ENCODE measurements at regions of chr11 and their contacts with region 1.

Region 1: DNA sequence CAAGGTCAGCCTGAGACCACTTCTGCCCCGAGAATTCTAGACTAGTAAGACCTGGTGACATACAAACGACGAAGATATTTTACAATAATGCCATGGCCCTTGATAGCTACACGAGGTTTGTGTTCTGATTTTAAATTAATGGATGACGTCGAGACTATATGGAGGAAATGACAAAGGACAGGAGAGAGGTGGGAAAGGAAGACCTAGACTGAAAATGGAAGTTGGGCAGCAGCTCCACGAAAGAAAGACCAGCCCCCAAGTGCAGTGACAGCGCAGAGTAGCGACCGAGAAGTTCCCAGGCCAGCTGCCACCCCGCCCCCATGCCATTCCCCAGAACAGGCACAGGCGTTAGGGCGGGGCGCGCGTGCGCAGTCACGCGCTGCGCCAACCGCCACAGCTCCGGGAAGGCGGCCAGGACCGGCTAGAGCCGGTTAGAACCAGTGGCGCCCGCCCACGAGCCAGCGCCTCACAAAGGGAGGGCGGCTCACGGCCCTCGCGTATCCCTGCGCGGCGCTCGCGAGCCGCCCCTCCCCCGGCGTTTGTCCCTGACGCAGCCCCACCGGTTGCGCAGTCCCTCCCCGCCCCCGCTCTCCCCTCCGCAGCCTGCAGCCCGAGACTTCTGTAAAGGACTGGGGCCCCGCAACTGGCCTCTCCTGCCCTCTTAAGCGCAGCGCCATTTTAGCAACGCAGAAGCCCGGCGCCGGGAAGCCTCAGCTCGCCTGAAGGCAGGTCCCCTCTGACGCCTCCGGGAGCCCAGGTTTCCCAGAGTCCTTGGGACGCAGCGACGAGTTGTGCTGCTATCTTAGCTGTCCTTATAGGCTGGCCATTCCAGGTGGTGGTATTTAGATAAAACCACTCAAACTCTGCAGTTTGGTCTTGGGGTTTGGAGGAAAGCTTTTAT is 1.5 kb upstream of the MALAT1 start:
- DNase-seq: peak; percentile 98
- ATAC-seq: peak; percentile 76
- H3K4me3 Mint-ChIP-seq: no peak overlapping the region
- H3K27ac Mint-ChIP-seq: no peak overlapping the region
- H3K4me1 Mint-ChIP-seq: peaks cover 35% of the 10 kb centered on the region
- H3K27me3 Mint-ChIP-seq: no peaks in the 10 kb centered on the region

Region 2: DNA sequence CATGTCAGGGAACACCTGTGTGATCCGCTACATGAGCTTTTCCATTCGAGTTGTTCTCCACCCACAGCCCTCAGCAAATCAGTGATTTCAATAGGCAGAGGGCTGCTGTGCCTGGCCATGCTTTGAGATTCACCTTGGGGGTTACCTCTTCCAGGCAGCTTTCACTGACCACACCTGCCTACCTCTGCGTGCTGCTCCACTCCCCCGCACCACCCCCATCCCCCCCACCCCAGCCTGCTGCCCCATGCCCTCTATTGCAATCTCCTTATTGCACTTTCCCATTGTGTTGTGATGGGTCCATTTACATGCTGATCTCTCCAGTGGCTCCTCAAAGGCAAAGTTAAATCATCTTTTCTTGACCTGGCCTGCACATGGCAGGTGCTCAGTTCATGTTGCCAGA is 253.6 kb before region 1 on chr11:
- CTCF ChIA-PET with region 1: no interaction called
- POLR2A ChIA-PET with region 1: no interaction called
- DNase-seq: no peak
- ATAC-seq: no peak
- H3K4me3 Mint-ChIP-seq: no peak overlapping the region
- H3K27ac Mint-ChIP-seq: no peak overlapping the region
- H3K4me1 Mint-ChIP-seq: no peaks in the 10 kb centered on the region
- H3K27me3 Mint-ChIP-seq: no peaks in the 10 kb centered on the region

Region 3: GRCh38 chr11:65261591-65262380 is 235.6 kb before region 1 on chr11 and contains the start of gene POLA2:
- CTCF ChIA-PET with region 1: no interaction called
- POLR2A ChIA-PET with region 1: interaction called, 20 read pairs
- DNase-seq: peak; percentile 97
- ATAC-seq: peak; percentile 96
- H3K4me3 Mint-ChIP-seq: peak within 1 kb of the TSS; percentile 97
- H3K27ac Mint-ChIP-seq: peak within 1 kb of the TSS; percentile 94
- H3K4me1 Mint-ChIP-seq: peaks cover 61% of the 10 kb centered on the region
- H3K27me3 Mint-ChIP-seq: no peaks in the 10 kb centered on the region
- total RNA-seq, gene POLA2: 63.6 to 76.1 TPM

Region 4: DNA sequence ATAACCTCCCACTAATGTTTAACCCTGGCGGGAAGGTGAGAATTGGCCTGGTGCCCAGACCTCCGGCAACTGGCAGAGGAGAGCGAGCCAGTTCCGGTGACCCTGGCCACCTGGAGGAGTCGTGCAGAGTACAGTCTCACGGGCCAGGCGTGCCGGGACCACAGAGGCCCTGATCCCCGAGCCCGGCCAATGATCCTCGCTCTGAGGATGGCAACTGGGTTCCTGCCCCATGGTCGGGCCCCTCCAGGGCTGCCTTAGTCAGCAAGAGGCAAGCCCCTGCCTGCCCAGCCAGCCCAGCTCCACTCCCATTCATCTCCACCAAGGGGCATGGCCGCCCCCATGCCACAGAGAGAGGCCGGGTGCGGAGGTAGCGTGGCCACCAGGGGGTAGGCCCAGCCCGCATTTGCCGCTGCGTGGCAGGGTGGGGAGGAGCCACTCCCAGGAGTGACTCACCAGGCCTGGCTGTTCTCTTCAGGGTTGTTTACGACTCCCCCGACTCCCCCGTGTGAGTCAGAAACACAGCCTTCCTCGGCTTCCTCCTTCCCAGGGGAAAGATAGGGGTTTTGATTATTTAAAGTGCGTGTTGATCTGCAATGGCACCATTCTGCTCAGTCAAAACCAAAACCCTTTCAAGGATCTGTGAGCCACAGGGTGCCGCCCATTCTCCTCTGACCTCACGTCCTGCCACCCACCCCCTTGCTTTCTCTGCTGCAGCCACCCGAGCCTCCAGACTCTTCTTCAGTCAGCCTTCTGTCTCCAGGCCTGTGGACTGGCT is 115.2 kb before region 1 on chr11 and contains the start of gene SLC25A45:
- CTCF ChIA-PET with region 1: interaction called, 9 read pairs
- POLR2A ChIA-PET with region 1: interaction called, 169 read pairs
- DNase-seq: peak; percentile 92
- ATAC-seq: peak; percentile 87
- H3K4me3 Mint-ChIP-seq: peak within 1 kb of the TSS; percentile 83
- H3K27ac Mint-ChIP-seq: peak within 1 kb of the TSS; percentile 99
- H3K4me1 Mint-ChIP-seq: peaks cover 47% of the 10 kb centered on the region
- H3K27me3 Mint-ChIP-seq: no peaks in the 10 kb centered on the region
- total RNA-seq, gene SLC25A45: 24.5 to 28.2 TPM

Region 5: GRCh38 chr11:65440831-65441499 is 56.4 kb before region 1 on chr11:
- CTCF ChIA-PET with region 1: interaction called, 4 read pairs
- POLR2A ChIA-PET with region 1: interaction called, 20 read pairs
- DNase-seq: no peak
- ATAC-seq: peak; percentile 10
- H3K4me3 Mint-ChIP-seq: peak overlapping the region; percentile 45
- H3K27ac Mint-ChIP-seq: peak overlapping the region; percentile 86
- H3K4me1 Mint-ChIP-seq: peaks cover 60% of the 10 kb centered on the region
- H3K27me3 Mint-ChIP-seq: no peaks in the 10 kb centered on the region

Region 6: GRCh38 chr11:65516135-65516935 is 18.9 kb after region 1 on chr11:
- CTCF ChIA-PET with region 1: interaction called, 32 read pairs
- POLR2A ChIA-PET with region 1: interaction called, 14 read pairs
- DNase-seq: no peak
- ATAC-seq: peak; percentile 62
- H3K4me3 Mint-ChIP-seq: no peak overlapping the region
- H3K27ac Mint-ChIP-seq: peak overlapping the region; percentile 32
- H3K4me1 Mint-ChIP-seq: peaks cover 10% of the 10 kb centered on the region
- H3K27me3 Mint-ChIP-seq: no peaks in the 10 kb centered on the region

Region 7: GRCh38 chr11:65569973-65570918 is 72.9 kb after region 1 on chr11 and contains the start of gene ZNRD2:
- CTCF ChIA-PET with region 1: no interaction called
- POLR2A ChIA-PET with region 1: interaction called, 38 read pairs
- DNase-seq: peak; percentile 99
- ATAC-seq: peak; percentile 70
- H3K4me3 Mint-ChIP-seq: peak within 1 kb of the TSS; percentile 100
- H3K27ac Mint-ChIP-seq: peak within 1 kb of the TSS; percentile 99
- H3K4me1 Mint-ChIP-seq: peaks cover 71% of the 10 kb centered on the region
- H3K27me3 Mint-ChIP-seq: no peaks in the 10 kb centered on the region
- total RNA-seq, gene ZNRD2: 39.2 to 40.7 TPM

Region 8: DNA sequence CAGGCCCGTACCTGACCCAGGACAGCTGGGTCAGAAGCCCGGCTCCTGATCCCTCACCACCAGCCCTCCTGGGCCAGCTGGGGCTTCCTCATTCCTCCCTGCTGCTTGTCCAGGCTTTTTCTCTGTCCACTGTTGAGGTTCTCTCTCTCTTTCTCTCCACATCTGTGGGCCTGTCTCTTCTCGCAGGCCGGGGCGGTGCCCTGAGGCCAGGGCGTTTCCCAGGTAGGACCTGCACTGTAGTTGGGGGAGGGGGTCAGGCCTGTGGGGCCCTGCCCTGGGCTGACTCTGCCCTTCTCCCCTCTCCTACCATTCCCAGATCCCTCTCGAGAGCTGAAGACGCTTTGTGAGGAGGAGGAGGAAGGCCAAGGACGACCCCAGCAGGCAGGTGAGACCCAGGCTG is 83.4 kb after region 1 on chr11:
- CTCF ChIA-PET with region 1: no interaction called
- POLR2A ChIA-PET with region 1: no interaction called
- DNase-seq: no peak
- ATAC-seq: no peak
- H3K4me3 Mint-ChIP-seq: no peak overlapping the region
- H3K27ac Mint-ChIP-seq: no peak overlapping the region
- H3K4me1 Mint-ChIP-seq: peaks cover 44% of the 10 kb centered on the region
- H3K27me3 Mint-ChIP-seq: no peaks in the 10 kb centered on the region

Region 9: GRCh38 chr11:65726660-65727059 is 229.3 kb after region 1 on chr11:
- CTCF ChIA-PET with region 1: no interaction called
- POLR2A ChIA-PET with region 1: no interaction called
- DNase-seq: no peak
- ATAC-seq: no peak
- H3K4me3 Mint-ChIP-seq: no peak overlapping the region
- H3K27ac Mint-ChIP-seq: no peak overlapping the region
- H3K4me1 Mint-ChIP-seq: peaks cover 5% of the 10 kb centered on the region
- H3K27me3 Mint-ChIP-seq: peaks cover 5% of the 10 kb centered on the region